ENCODE measurements at regions of chr10 and their contacts with region 1.

Region 1: DNA sequence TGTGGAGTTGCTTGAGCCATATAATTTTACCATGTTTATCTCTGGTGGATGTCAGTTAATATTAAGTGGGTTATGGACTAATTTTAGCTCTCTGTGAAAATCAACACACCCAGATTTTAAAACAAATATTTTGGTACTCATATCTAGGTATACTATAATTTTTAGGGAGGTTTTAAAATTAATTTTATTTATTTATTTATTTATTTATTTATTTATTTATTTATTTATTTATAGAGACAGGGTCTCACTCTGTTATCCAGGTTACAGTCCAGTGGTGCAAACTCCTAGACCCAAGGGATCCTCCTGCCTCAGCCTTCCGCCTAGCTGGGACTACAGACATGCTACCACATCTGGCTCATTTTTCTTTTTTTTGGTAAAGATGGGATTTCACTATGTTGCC is 7.3 kb upstream of the CREM start:
- DNase-seq: no peak
- H3K4me3 ChIP-seq: no peak overlapping the region
- H3K27ac ChIP-seq: no peak overlapping the region
- H3K4me1 ChIP-seq: no peaks in the 10 kb centered on the region
- H3K27me3 ChIP-seq: no peaks in the 10 kb centered on the region
- CTCF ChIP-seq: no peak
- EP300 ChIP-seq: no peak
- POLR2A ChIP-seq: no peak
- RAD21 ChIP-seq: no peak

Region 2: GRCh38 chr10:34954168-34954567 is 165.2 kb before region 1 on chr10:
- CTCF ChIA-PET with region 1: no interaction called
- POLR2A ChIA-PET with region 1: no interaction called
- DNase-seq: no peak
- H3K4me3 ChIP-seq: no peak overlapping the region
- H3K27ac ChIP-seq: no peak overlapping the region
- H3K4me1 ChIP-seq: no peaks in the 10 kb centered on the region
- H3K27me3 ChIP-seq: no peaks in the 10 kb centered on the region
- CTCF ChIP-seq: no peak
- EP300 ChIP-seq: no peak
- POLR2A ChIP-seq: no peak
- RAD21 ChIP-seq: no peak

Region 3: DNA sequence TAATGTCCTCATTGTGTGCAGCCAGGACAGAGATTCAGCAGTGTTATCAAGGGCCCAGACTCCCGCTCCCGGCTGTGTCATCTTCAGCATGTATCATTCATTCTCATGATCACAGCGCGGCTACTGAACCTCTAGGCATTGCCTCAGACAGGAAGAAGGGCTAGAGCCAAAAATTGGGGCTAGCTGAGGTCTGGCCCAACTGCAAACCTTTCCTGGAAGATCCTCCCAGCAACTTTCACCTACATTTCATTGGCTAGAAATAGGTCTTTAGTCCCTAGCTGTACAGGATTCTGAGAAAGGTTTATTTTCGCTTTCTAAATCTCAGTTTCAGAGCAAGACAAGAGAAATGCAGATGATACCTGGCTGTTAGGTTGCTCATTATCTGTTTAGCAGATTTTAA is 89.2 kb after region 1 on chr10:
- CTCF ChIA-PET with region 1: interaction called, 177 read pairs
- POLR2A ChIA-PET with region 1: no interaction called
- DNase-seq: no peak
- H3K4me3 ChIP-seq: no peak overlapping the region
- H3K27ac ChIP-seq: no peak overlapping the region
- H3K4me1 ChIP-seq: peaks cover 2 to 12% (median 6%) of the 10 kb centered on the region in 4 experiments; a peak in 5 of 7 replicates
- H3K27me3 ChIP-seq: peaks cover 0 to under 1% (median 0%) of the 10 kb centered on the region in 4 experiments; a peak in 1 of 7 replicates
- CTCF ChIP-seq: no peak
- EP300 ChIP-seq: no peak
- POLR2A ChIP-seq: no peak
- RAD21 ChIP-seq: no peak